H1 (cell line): ENCODE measurements at regions of chr12 and their contacts with region 1.

Region 1: DNA sequence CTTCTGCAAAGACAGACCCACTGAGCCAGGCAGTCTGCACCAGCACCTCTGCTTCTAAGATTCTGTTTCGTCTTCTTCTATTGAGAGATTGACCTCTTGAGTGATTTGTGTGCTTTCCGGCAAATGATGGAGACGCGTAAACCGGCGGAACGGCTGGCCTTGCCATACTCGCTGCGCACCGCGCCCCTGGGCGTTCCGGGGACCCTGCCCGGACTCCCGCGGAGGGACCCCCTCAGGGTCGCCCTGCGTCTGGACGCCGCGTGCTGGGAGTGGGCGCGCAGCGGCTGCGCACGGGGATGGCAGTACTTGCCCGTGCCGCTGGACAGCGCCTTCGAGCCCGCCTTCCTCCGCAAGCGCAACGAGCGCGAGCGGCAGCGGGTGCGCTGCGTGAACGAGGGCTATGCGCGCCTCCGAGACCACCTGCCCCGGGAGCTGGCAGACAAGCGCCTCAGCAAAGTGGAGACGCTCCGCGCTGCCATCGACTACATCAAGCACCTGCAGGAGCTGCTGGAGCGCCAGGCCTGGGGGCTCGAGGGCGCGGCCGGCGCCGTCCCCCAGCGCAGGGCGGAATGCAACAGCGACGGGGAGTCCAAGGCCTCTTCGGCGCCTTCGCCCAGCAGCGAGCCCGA is 703 bp downstream of the ASCL4 start:
- DNase-seq: peak; percentile 62 to 85
- H3K4me3 ChIP-seq: peak overlapping the region; percentile 31 to 68 (median 50)
- H3K27ac ChIP-seq: no peak overlapping the region
- H3K4me1 ChIP-seq: peaks cover 0 to 3% (median 0%) of the 10 kb centered on the region in 4 experiments; a peak in 2 of 7 replicates
- H3K27me3 ChIP-seq: peaks cover 21 to 49% (median 44%) of the 10 kb centered on the region in 4 experiments
- CTCF ChIP-seq: peak; percentile 53 to 68 (median 58)
- EP300 ChIP-seq: no peak
- POLR2A ChIP-seq: no peak
- RAD21 ChIP-seq: peak; percentile 45 to 49

Region 2: GRCh38 chr12:107736914-107737313 is 38.3 kb before region 1 on chr12:
- CTCF ChIA-PET with region 1: no interaction called
- POLR2A ChIA-PET with region 1: no interaction called
- DNase-seq: no peak
- H3K4me3 ChIP-seq: no peak overlapping the region
- H3K27ac ChIP-seq: no peak overlapping the region
- H3K4me1 ChIP-seq: no peaks in the 10 kb centered on the region
- H3K27me3 ChIP-seq: no peaks in the 10 kb centered on the region
- CTCF ChIP-seq: no peak
- EP300 ChIP-seq: no peak
- POLR2A ChIP-seq: no peak
- RAD21 ChIP-seq: no peak

Region 3: GRCh38 chr12:107788690-107789458 is 13.7 kb after region 1 on chr12:
- CTCF ChIA-PET with region 1: interaction called, 11 read pairs
- POLR2A ChIA-PET with region 1: no interaction called
- DNase-seq: no peak
- H3K4me3 ChIP-seq: no peak overlapping the region
- H3K27ac ChIP-seq: no peak overlapping the region
- H3K4me1 ChIP-seq: no peaks in the 10 kb centered on the region
- H3K27me3 ChIP-seq: no peaks in the 10 kb centered on the region
- CTCF ChIP-seq: no peak
- EP300 ChIP-seq: no peak
- POLR2A ChIP-seq: no peak
- RAD21 ChIP-seq: no peak